GM12878 (cell line): ENCODE measurements at regions of chr1 and their contacts with region 1.

Region 1: DNA sequence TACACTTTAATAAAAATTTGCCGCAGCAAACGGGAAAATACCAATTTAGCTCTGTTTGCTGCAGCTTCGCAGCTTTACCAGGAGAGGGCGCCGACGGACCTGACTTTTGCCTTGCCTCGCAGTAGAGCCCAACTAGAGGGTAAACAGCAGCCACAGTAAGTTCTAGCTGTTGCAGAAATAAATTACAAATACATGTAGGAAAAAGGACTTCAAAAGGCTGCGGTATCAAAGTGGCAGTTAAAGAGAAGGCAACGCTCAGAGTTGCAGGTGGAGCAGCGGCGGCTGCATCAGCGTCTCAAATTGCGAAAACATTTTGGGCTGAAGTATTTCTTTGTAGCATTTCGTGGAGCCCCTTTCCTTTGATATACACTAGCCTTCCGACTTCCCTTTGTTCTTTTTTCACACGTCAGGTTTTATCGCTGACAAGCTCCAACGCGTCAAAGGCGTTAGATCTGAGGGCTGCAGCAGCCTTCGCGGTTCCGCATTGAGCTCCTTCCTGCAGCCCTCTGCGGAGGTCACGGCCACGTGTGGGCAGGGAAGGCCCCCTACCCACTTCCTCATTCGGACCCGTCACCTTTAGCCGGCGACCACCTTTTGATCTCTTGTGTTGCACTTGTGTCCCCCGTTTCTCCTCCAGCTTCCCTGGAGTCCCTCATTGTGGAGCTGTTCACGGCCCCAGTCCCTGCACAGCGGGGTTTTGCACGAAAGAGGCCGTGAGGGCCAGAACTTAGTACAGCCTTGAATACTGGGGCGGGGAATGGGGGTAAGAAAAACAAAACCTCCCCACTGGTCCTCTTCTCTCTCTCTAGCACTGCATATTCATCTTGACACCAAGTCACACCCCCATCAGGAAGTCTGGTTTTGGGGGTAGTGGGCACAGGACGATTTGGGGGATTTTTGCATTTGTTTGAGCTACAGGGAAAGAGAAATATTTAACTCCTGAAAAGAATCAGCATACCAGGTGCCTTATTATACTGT is 72.8 kb downstream of the S1PR1 start:
- DNase-seq: no peak
- ATAC-seq: peak; percentile 79
- H3K4me3 ChIP-seq: peak overlapping the region; percentile 50
- H3K27ac ChIP-seq: peak overlapping the region; percentile 93
- H3K4me1 ChIP-seq: peaks cover 56% of the 10 kb centered on the region
- H3K27me3 ChIP-seq: no peaks in the 10 kb centered on the region
- CTCF ChIP-seq: peak; percentile 88 to 93 (median 92)
- EP300 ChIP-seq: peak; percentile 70 to 88; a peak in 3 of 4 replicates
- POLR2A ChIP-seq: peak; percentile 82
- RAD21 ChIP-seq: peak; percentile 88

Region 2: DNA sequence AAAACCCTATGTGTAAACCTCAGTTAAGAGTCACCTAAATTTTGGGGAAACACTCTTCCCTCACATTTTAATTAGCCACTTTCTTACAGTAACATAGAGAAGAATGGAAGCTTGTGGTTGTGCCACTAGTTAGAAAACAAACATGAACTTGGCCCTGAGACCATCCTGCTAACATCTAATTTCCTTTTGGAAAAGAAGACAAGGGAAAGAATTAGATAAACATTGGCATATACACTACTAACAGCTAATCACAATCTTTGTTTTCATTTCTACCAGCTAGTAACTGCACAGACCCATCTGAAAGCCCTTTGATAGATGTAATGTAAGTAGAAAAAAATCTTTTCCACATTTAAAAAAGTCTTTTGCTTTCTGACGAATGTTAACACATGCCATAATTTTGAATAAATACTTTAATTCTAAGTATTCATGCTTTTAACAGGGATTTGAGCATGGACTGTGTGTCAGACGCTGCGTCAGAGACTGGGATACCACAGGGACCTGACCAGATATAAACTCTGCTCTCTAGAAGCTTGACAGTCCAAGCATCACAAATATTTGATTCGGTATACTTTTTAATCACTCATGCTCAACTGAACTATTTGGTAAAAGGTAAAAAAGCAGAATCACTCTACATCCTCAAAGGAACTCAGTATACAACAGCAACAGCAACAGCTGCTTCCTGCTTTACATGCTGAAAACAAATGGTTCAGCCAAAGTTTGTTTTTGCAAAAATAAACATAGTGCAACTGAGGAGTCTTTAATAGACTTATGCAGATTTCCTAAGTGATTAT is 314.2 kb before region 1 on chr1:
- CTCF ChIA-PET with region 1: no interaction called
- POLR2A ChIA-PET with region 1: no interaction called
- RAD21 ChIA-PET with region 1: no interaction called
- SMC1A ChIA-PET with region 1: no interaction called
- in situ Hi-C with region 1: no loop called
- intact Hi-C with region 1: no loop called
- DNase-seq: no peak
- ATAC-seq: no peak
- H3K4me3 ChIP-seq: no peak overlapping the region
- H3K27ac ChIP-seq: no peak overlapping the region
- H3K4me1 ChIP-seq: no peaks in the 10 kb centered on the region
- H3K27me3 ChIP-seq: no peaks in the 10 kb centered on the region
- CTCF ChIP-seq: no peak
- EP300 ChIP-seq: no peak
- POLR2A ChIP-seq: no peak
- RAD21 ChIP-seq: no peak

Region 3: GRCh38 chr1:101262630-101263348 is 46.8 kb before region 1 on chr1:
- CTCF ChIA-PET with region 1: no interaction called
- POLR2A ChIA-PET with region 1: no interaction called
- RAD21 ChIA-PET with region 1: no interaction called
- SMC1A ChIA-PET with region 1: no interaction called
- in situ Hi-C with region 1: no loop called
- intact Hi-C with region 1: no loop called
- DNase-seq: no peak
- ATAC-seq: peak; percentile 12; the same call in 2 of the 3 replicates
- H3K4me3 ChIP-seq: no peak overlapping the region
- H3K27ac ChIP-seq: no peak overlapping the region
- H3K4me1 ChIP-seq: peaks cover 8% of the 10 kb centered on the region
- H3K27me3 ChIP-seq: no peaks in the 10 kb centered on the region
- CTCF ChIP-seq: no peak
- EP300 ChIP-seq: no peak
- POLR2A ChIP-seq: no peak
- RAD21 ChIP-seq: no peak

Region 4: GRCh38 chr1:101330427-101331130 is 21.0 kb after region 1 on chr1:
- CTCF ChIA-PET with region 1: interaction called, 4 read pairs
- POLR2A ChIA-PET with region 1: interaction called, 3 read pairs
- RAD21 ChIA-PET with region 1: interaction called, 4 read pairs
- SMC1A ChIA-PET with region 1: interaction called, 66 read pairs
- in situ Hi-C with region 1: no loop called
- intact Hi-C with region 1: loop called (anchors 2 kb)
- DNase-seq: no peak
- ATAC-seq: no peak
- H3K4me3 ChIP-seq: no peak overlapping the region
- H3K27ac ChIP-seq: no peak overlapping the region
- H3K4me1 ChIP-seq: no peaks in the 10 kb centered on the region
- H3K27me3 ChIP-seq: no peaks in the 10 kb centered on the region
- CTCF ChIP-seq: no peak
- EP300 ChIP-seq: no peak
- POLR2A ChIP-seq: no peak
- RAD21 ChIP-seq: no peak

Region 5: GRCh38 chr1:101364370-101365120 is 54.9 kb after region 1 on chr1:
- CTCF ChIA-PET with region 1: interaction called, 110 read pairs
- POLR2A ChIA-PET with region 1: interaction called, 3 read pairs
- RAD21 ChIA-PET with region 1: interaction called, 181 read pairs
- SMC1A ChIA-PET with region 1: interaction called, 113 read pairs
- in situ Hi-C with region 1: loop called (anchors 5 kb)
- intact Hi-C with region 1: no loop called
- DNase-seq: no peak
- ATAC-seq: peak; percentile 68
- H3K4me3 ChIP-seq: no peak overlapping the region
- H3K27ac ChIP-seq: peak overlapping the region; percentile 83
- H3K4me1 ChIP-seq: peaks cover 29% of the 10 kb centered on the region
- H3K27me3 ChIP-seq: no peaks in the 10 kb centered on the region
- CTCF ChIP-seq: no peak
- EP300 ChIP-seq: 0 out of 4 replicates have a peak, but pooled peaks of 1 of the 2 experiments have one; percentile 15
- POLR2A ChIP-seq: no peak
- RAD21 ChIP-seq: no peak

Region 6: GRCh38 chr1:101388904-101389546 is 79.4 kb after region 1 on chr1:
- CTCF ChIA-PET with region 1: interaction called, 13 read pairs
- POLR2A ChIA-PET with region 1: interaction called, 9 read pairs
- RAD21 ChIA-PET with region 1: interaction called, 30 read pairs
- SMC1A ChIA-PET with region 1: interaction called, 25 read pairs
- in situ Hi-C with region 1: no loop called
- intact Hi-C with region 1: loop called (anchors 1 kb)
- DNase-seq: peak; percentile 90
- ATAC-seq: peak; percentile 93
- H3K4me3 ChIP-seq: no peak overlapping the region
- H3K27ac ChIP-seq: peak overlapping the region; percentile 96
- H3K4me1 ChIP-seq: peaks cover 34% of the 10 kb centered on the region
- H3K27me3 ChIP-seq: no peaks in the 10 kb centered on the region
- CTCF ChIP-seq: no peak
- EP300 ChIP-seq: no peak; a peak in 1 of 4 replicates
- POLR2A ChIP-seq: no peak
- RAD21 ChIP-seq: peak; percentile 15; the same call in 1 of the 2 replicates

Region 7: GRCh38 chr1:101410048-101410878 is 100.6 kb after region 1 on chr1:
- CTCF ChIA-PET with region 1: interaction called, 155 read pairs
- POLR2A ChIA-PET with region 1: interaction called, 103 read pairs
- RAD21 ChIA-PET with region 1: interaction called, 308 read pairs
- SMC1A ChIA-PET with region 1: interaction called, 235 read pairs
- in situ Hi-C with region 1: no loop called
- intact Hi-C with region 1: loop called (anchors 1 kb)
- DNase-seq: peak; percentile 99
- ATAC-seq: peak; percentile 64
- H3K4me3 ChIP-seq: no peak overlapping the region
- H3K27ac ChIP-seq: peak overlapping the region; percentile 98
- H3K4me1 ChIP-seq: peaks cover 51% of the 10 kb centered on the region
- H3K27me3 ChIP-seq: no peaks in the 10 kb centered on the region
- CTCF ChIP-seq: no peak
- EP300 ChIP-seq: peak in 1 of 2 experiments; percentile 67; a peak in 1 of 4 replicates
- POLR2A ChIP-seq: peak; percentile 59
- RAD21 ChIP-seq: peak; percentile 42; the same call in 1 of the 2 replicates

Region 8: DNA sequence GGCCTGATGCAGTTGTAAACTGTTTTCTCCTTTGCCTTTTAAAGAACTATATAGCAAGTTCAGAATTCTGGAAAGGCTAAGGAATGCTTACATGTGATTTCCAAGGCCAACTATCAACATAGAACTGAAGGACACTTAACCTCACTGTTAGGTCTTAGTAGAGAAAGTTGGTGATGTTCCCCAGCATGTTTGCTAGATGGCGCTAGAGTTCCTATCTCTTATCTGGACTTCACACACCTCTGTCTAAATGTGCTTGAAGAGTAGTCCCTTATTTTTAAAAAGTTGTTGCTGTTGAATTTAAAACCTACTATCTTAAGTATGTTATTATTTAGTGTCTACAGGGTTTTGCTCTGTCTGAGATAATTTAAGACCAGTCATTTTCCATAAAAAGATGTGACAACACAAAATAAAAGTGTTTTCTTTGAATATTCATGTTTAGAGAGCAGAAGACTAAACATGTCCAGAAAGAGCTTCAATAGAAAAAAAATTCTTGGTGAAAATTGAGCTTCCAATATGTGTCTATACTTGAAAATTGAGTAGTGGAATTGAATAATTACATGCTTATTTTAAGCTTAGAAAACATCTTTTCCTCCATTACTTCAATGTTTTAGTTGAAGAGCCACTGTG is 164.5 kb after region 1 on chr1:
- CTCF ChIA-PET with region 1: interaction called, 10 read pairs
- POLR2A ChIA-PET with region 1: no interaction called
- RAD21 ChIA-PET with region 1: interaction called, 3 read pairs
- SMC1A ChIA-PET with region 1: interaction called, 4 read pairs
- in situ Hi-C with region 1: no loop called
- intact Hi-C with region 1: no loop called
- DNase-seq: no peak
- ATAC-seq: peak; percentile 90
- H3K4me3 ChIP-seq: no peak overlapping the region
- H3K27ac ChIP-seq: no peak overlapping the region
- H3K4me1 ChIP-seq: no peaks in the 10 kb centered on the region
- H3K27me3 ChIP-seq: no peaks in the 10 kb centered on the region
- CTCF ChIP-seq: peak; percentile 38 to 54 (median 51)
- EP300 ChIP-seq: no peak
- POLR2A ChIP-seq: no peak
- RAD21 ChIP-seq: peak; percentile 27; the same call in 1 of the 2 replicates

Region 9: DNA sequence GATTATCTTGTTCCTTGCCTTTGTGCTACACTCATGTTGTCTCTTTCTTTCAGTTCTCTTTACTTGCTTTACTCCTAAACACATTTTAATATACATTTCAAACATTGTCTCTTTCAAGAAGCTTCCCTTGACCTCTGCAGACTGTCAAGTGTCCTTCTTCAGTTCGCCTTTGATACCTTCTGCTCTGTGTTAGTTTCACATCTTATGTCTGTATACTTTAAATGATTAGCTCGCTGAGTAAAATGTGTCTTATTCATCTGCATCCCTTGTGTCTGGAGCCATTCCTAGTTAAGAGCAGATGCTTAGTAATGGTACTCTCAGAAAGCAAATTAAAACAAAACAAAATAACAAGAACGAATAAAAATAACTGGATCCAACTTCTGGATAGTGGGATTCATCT is 230.5 kb after region 1 on chr1:
- CTCF ChIA-PET with region 1: no interaction called
- POLR2A ChIA-PET with region 1: no interaction called
- RAD21 ChIA-PET with region 1: no interaction called
- SMC1A ChIA-PET with region 1: no interaction called
- in situ Hi-C with region 1: no loop called
- intact Hi-C with region 1: no loop called
- DNase-seq: no peak
- ATAC-seq: no peak; the same call in 2 of the 3 replicates
- H3K4me3 ChIP-seq: no peak overlapping the region
- H3K27ac ChIP-seq: no peak overlapping the region
- H3K4me1 ChIP-seq: no peaks in the 10 kb centered on the region
- H3K27me3 ChIP-seq: no peaks in the 10 kb centered on the region
- CTCF ChIP-seq: no peak
- EP300 ChIP-seq: no peak
- POLR2A ChIP-seq: no peak
- RAD21 ChIP-seq: no peak